Calu3 (cell line): ENCODE measurements at regions of chr7 and their contacts with region 1.

Region 1: DNA sequence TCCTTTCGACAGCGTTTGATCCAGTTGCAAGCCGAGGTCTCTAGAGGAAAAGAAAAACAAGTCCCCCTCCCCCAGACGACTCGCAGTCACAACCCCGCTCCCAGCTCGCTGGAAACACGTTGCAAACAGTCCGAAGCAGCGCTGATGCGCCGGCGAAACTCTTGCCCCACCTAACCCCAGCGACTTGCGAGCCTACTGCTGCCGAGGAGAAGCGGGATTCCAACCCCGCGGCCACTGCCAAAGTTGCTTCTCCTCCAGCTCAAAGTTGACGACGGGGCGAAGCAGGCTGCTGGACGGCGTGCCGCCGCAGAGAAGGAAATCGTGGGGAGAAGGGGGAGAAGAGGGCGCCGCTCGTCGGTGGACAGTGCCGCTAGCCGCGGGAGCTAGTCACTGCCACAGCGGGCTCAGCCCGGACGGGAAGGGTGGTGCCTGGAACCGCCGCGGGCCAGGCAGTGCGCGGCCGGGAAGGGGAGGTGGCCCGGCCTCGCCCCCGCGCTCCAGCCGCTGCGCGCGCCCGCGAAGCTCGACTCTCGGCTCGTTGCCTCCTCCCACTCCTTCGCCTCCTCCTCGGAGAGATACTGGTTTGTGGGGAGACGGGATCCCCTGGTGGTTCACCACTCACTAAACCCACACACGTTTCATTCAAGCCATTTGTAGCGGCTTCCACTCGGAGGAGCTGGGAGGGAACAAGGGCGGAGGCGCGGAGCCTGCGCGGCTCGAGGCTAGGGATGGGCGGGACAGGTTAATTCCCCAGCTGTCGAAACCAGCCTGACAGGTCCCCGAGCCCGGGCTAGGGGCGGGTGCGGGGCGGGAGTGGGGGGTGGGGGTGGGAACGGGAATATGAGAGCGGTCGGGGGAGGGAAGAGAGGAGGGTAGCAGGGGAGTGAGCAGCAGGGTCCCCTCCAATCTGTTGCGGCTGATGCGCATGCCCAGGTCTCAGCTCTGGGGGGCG is at the start of gene GPR37:
- DNase-seq: peak; percentile 85
- H3K4me3 Mint-ChIP-seq: peak within 1 kb of the TSS; percentile 80
- H3K27ac Mint-ChIP-seq: peak within 1 kb of the TSS; percentile 15
- H3K4me1 Mint-ChIP-seq: peaks cover 15% of the 10 kb centered on the region
- H3K27me3 Mint-ChIP-seq: no peaks in the 10 kb centered on the region
- CTCF ChIP-seq: peak; percentile 9
- total RNA-seq, gene GPR37: 7.5 and 7.9 TPM in 2 replicates

Region 2: DNA sequence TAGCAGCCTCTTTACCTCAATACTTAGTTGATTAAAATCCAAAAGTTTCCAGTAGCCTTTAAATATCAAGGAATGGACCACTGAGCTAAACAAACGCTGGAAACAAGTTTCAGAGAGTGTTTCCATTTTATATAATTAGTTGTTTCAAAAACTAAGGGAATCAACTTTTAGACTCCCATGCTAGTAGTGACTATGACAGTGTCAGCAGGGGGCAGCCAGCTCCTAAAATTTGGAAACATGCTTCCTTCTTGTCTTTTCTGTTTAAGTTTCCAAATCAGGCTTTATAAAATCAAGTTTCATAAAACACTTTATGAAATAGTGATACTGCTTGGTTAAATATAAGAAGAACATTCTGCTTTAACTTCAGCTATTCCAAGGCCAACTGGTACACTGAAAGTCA is 594.6 kb before region 1 on chr7:
- CTCF ChIA-PET with region 1: interaction called, 5 read pairs
- intact Hi-C with region 1: loop called (anchors 5 kb)
- DNase-seq: peak; percentile 47
- H3K4me3 Mint-ChIP-seq: no peak overlapping the region
- H3K27ac Mint-ChIP-seq: no peak overlapping the region
- H3K4me1 Mint-ChIP-seq: no peaks in the 10 kb centered on the region
- H3K27me3 Mint-ChIP-seq: no peaks in the 10 kb centered on the region
- CTCF ChIP-seq: peak; percentile 20

Region 3: GRCh38 chr7:124459101-124460055 is 306.3 kb before region 1 on chr7:
- CTCF ChIA-PET with region 1: no interaction called
- intact Hi-C with region 1: loop called (anchors 5 kb)
- DNase-seq: peak; percentile 52
- H3K4me3 Mint-ChIP-seq: peak overlapping the region; percentile 37
- H3K27ac Mint-ChIP-seq: peak overlapping the region; percentile 92
- H3K4me1 Mint-ChIP-seq: peaks cover 24% of the 10 kb centered on the region
- H3K27me3 Mint-ChIP-seq: no peaks in the 10 kb centered on the region
- CTCF ChIP-seq: no peak

Region 4: GRCh38 chr7:124667312-124668153 is 98.1 kb before region 1 on chr7:
- CTCF ChIA-PET with region 1: interaction called, 3 read pairs
- intact Hi-C with region 1: loop called (anchors 5 kb)
- DNase-seq: no peak
- H3K4me3 Mint-ChIP-seq: no peak overlapping the region
- H3K27ac Mint-ChIP-seq: no peak overlapping the region
- H3K4me1 Mint-ChIP-seq: no peaks in the 10 kb centered on the region
- H3K27me3 Mint-ChIP-seq: no peaks in the 10 kb centered on the region
- CTCF ChIP-seq: no peak

Region 5: GRCh38 chr7:124779194-124779593 is 13.5 kb after region 1 on chr7:
- CTCF ChIA-PET with region 1: interaction called, 13 read pairs
- intact Hi-C with region 1: no loop called
- DNase-seq: no peak
- H3K4me3 Mint-ChIP-seq: no peak overlapping the region
- H3K27ac Mint-ChIP-seq: no peak overlapping the region
- H3K4me1 Mint-ChIP-seq: no peaks in the 10 kb centered on the region
- H3K27me3 Mint-ChIP-seq: no peaks in the 10 kb centered on the region
- CTCF ChIP-seq: no peak

Region 6: GRCh38 chr7:124856299-124856888 is 90.7 kb after region 1 on chr7:
- CTCF ChIA-PET with region 1: no interaction called
- intact Hi-C with region 1: no loop called
- DNase-seq: no peak
- H3K4me3 Mint-ChIP-seq: no peak overlapping the region
- H3K27ac Mint-ChIP-seq: no peak overlapping the region
- H3K4me1 Mint-ChIP-seq: peaks cover 8% of the 10 kb centered on the region
- H3K27me3 Mint-ChIP-seq: no peaks in the 10 kb centered on the region
- CTCF ChIP-seq: peak; percentile 18

Region 7: DNA sequence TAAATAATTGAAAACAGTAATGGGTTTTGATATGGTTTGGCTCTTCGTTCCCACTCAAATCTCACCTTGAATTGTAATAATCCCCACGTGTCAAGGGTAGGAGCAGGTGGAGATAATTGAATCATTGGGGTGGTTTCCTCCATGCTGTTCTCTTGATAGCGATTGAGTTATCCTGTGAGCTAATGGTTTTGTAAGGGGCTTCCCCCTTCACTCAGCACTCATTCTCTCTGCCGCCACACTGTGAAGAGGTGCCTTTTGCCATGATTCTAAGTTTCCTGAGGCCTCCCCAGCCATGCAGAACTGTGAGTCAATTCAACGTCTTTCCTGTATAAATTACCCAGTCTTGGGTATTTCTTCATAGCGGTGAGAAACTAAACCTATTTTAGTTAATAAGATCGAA is 715.6 kb after region 1 on chr7:
- CTCF ChIA-PET with region 1: no interaction called
- intact Hi-C with region 1: no loop called
- DNase-seq: no peak
- H3K4me3 Mint-ChIP-seq: no peak overlapping the region
- H3K27ac Mint-ChIP-seq: no peak overlapping the region
- H3K4me1 Mint-ChIP-seq: no peaks in the 10 kb centered on the region
- H3K27me3 Mint-ChIP-seq: no peaks in the 10 kb centered on the region
- CTCF ChIP-seq: no peak